ENCODE measurements at regions of chr6 and their contacts with region 1.

Region 1: GRCh38 chr6:44172731-44173500 is 14.3 kb downstream of the CAPN11 start:
- DNase-seq: peak; percentile 73
- ATAC-seq: peak; percentile 94
- H3K4me3 ChIP-seq: no peak overlapping the region
- H3K27ac ChIP-seq: peak overlapping the region; percentile 64
- H3K4me1 ChIP-seq: peaks cover 28% of the 10 kb centered on the region
- H3K27me3 ChIP-seq: no peaks in the 10 kb centered on the region
- CTCF ChIP-seq: peak; percentile 94

Region 2: DNA sequence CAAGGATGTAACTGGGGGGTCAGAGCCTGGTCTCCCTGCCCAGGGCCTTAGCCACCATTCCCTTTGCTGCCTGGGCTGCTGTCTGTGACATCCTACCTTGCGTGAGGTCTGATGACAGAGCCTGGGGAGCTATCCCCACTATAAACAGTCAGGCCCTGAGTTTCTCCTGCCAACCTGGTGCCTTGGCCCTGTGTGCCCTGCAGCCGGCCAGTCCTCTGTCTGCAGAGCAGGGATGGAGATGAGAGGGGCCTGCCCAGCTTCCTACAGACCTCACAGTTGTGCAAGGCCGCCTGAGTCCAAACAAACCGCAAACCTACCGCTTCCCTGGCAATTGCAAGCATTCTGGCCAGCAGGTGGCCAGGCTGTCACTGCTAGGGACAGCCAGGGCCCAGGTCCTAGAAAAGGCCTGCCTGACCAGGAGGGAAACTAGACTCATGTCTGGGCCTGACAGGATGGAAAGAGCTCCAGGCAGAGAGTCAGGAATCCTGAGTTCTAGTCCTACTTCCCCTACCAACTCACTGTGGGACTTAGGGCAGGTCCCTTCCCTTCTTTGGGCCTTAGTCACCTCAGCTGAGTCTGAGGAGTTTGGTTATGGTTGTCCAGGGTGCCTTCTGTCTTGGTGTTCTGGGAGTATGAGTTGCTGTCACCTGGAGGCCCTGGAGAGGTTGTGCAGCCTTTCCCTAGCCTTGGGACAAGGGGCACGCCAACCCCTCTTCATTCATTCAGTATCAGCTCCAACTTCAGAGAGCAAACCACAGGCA is 316.7 kb before region 1 on chr6:
- CTCF ChIA-PET with region 1: no interaction called
- POLR2A ChIA-PET with region 1: no interaction called
- in situ Hi-C with region 1: no loop called
- intact Hi-C with region 1: no loop called
- DNase-seq: no peak
- ATAC-seq: peak; percentile 82; the same call in 1 of the 2 replicates
- H3K4me3 ChIP-seq: no peak overlapping the region
- H3K27ac ChIP-seq: peak overlapping the region; percentile 59; the same call in 1 of the 2 replicates
- H3K4me1 ChIP-seq: no peaks in the 10 kb centered on the region
- H3K27me3 ChIP-seq: no peaks in the 10 kb centered on the region
- CTCF ChIP-seq: peak; percentile 80

Region 3: DNA sequence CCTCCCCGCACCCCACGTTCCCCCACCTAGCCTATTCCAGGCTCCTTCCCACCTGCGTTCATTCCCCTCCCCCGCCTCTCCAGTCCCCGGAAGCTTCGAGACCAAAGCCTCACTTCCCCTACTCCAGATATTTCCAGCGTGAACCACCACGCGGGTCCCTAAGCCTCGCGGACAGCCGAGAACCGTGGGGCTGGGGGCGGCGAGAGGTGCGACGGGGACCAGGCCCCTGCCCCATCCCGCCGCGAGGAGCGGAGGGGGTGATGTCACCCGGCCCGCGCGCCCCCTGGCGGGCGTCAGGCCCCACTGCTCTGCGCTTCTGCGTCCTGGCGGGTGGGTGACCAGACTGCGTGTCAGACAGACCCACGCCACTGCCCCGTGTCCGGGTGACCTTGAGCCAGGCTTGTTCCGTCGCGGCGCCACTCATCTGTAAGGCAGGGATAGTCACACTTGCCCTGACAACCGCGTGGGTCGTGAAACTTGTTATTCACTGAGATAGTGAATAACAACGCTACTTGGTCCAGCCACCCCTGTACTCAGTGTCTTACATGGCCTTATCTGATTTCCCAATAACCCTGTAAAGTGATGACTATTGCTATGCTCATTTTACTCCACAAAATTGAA is 65.0 kb after region 1 on chr6:
- CTCF ChIA-PET with region 1: interaction called, 7 read pairs
- POLR2A ChIA-PET with region 1: interaction called, 3 read pairs
- in situ Hi-C with region 1: no loop called
- intact Hi-C with region 1: loop called (anchors 5 kb)
- DNase-seq: no peak
- ATAC-seq: peak; percentile 80
- H3K4me3 ChIP-seq: peak overlapping the region; percentile 49 to 67
- H3K27ac ChIP-seq: peak overlapping the region; percentile 92
- H3K4me1 ChIP-seq: peaks cover 53% of the 10 kb centered on the region
- H3K27me3 ChIP-seq: no peaks in the 10 kb centered on the region
- CTCF ChIP-seq: peak; percentile 98

Region 4: GRCh38 chr6:44257025-44257752 is 84.3 kb after region 1 on chr6 and contains the start of gene SLC35B2:
- CTCF ChIA-PET with region 1: interaction called, 4 read pairs
- POLR2A ChIA-PET with region 1: interaction called, 3 read pairs
- in situ Hi-C with region 1: no loop called
- intact Hi-C with region 1: loop called (anchors 1 kb)
- DNase-seq: no peak
- ATAC-seq: peak; percentile 75
- H3K4me3 ChIP-seq: peak within 1 kb of the TSS; percentile 87 to 95
- H3K27ac ChIP-seq: peak within 1 kb of the TSS; percentile 83
- H3K4me1 ChIP-seq: peaks cover 42% of the 10 kb centered on the region
- H3K27me3 ChIP-seq: no peaks in the 10 kb centered on the region
- CTCF ChIP-seq: peak; percentile 98
- total RNA-seq, gene SLC35B2: 105 TPM

Region 5: GRCh38 chr6:44387346-44388133 is 214.6 kb after region 1 on chr6 and contains the start of gene CDC5L:
- CTCF ChIA-PET with region 1: no interaction called
- POLR2A ChIA-PET with region 1: no interaction called
- in situ Hi-C with region 1: no loop called
- intact Hi-C with region 1: no loop called
- DNase-seq: peak; percentile 99
- ATAC-seq: peak; percentile 97
- H3K4me3 ChIP-seq: peak within 1 kb of the TSS; percentile 91
- H3K27ac ChIP-seq: peak within 1 kb of the TSS; percentile 97
- H3K4me1 ChIP-seq: peaks cover 21% of the 10 kb centered on the region; the same call in 1 of the 2 replicates
- H3K27me3 ChIP-seq: no peaks in the 10 kb centered on the region
- CTCF ChIP-seq: no peak
- total RNA-seq, gene CDC5L: 23.3 TPM

Region 6: GRCh38 chr6:44606504-44606903 is 433.6 kb after region 1 on chr6:
- CTCF ChIA-PET with region 1: no interaction called
- POLR2A ChIA-PET with region 1: no interaction called
- in situ Hi-C with region 1: no loop called
- intact Hi-C with region 1: no loop called
- DNase-seq: no peak
- ATAC-seq: no peak
- H3K4me3 ChIP-seq: no peak overlapping the region
- H3K27ac ChIP-seq: no peak overlapping the region
- H3K4me1 ChIP-seq: no peaks in the 10 kb centered on the region
- H3K27me3 ChIP-seq: no peaks in the 10 kb centered on the region
- CTCF ChIP-seq: no peak

Region 7: GRCh38 chr6:44618371-44618770 is 445.5 kb after region 1 on chr6:
- CTCF ChIA-PET with region 1: no interaction called
- POLR2A ChIA-PET with region 1: no interaction called
- in situ Hi-C with region 1: no loop called
- intact Hi-C with region 1: no loop called
- DNase-seq: no peak
- ATAC-seq: no peak
- H3K4me3 ChIP-seq: no peak overlapping the region
- H3K27ac ChIP-seq: no peak overlapping the region
- H3K4me1 ChIP-seq: no peaks in the 10 kb centered on the region
- H3K27me3 ChIP-seq: no peaks in the 10 kb centered on the region; the same call in 1 of the 2 replicates
- CTCF ChIP-seq: no peak

Measured in Panc1 (cell line).